ENCODE measurements at regions of chr10 and their contacts with region 1.

Region 1: GRCh38 chr10:84542522-84543490 is 214.4 kb downstream of the CCSER2 start:
- DNase-seq: no peak
- H3K4me3 ChIP-seq: no peak overlapping the region
- H3K27ac ChIP-seq: no peak overlapping the region
- H3K4me1 ChIP-seq: no peaks in the 10 kb centered on the region
- H3K27me3 ChIP-seq: peaks cover 3% of the 10 kb centered on the region
- CTCF ChIP-seq: no peak

Region 2: DNA sequence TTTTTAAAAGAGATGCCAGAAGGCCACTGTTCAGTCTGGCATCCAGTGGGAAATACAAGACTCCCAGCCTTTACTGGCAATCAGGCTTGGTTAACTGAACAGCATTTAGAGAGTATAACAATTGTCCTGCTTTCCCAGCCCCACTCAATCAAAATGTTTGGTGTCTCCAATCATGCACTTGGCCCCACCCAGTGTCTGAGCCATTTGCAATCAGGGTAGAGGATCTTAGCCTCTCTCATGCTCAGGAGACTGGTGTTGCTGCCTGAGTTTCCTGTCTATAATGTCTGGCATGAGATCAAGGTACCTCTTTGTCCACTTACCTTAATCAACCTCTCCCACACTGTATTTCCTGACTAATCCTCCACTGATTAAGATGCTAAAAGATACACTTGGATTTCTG is 693.7 kb before region 1 on chr10:
- CTCF ChIA-PET with region 1: no interaction called
- POLR2A ChIA-PET with region 1: no interaction called
- intact Hi-C with region 1: no loop called
- DNase-seq: no peak
- H3K4me3 ChIP-seq: no peak overlapping the region
- H3K27ac ChIP-seq: no peak overlapping the region
- H3K4me1 ChIP-seq: no peaks in the 10 kb centered on the region
- H3K27me3 ChIP-seq: no peaks in the 10 kb centered on the region
- CTCF ChIP-seq: no peak

Region 3: GRCh38 chr10:84156768-84157167 is 386.0 kb before region 1 on chr10:
- CTCF ChIA-PET with region 1: no interaction called
- POLR2A ChIA-PET with region 1: interaction called, 19 read pairs
- intact Hi-C with region 1: no loop called
- DNase-seq: no peak
- H3K4me3 ChIP-seq: no peak overlapping the region
- H3K27ac ChIP-seq: no peak overlapping the region
- H3K4me1 ChIP-seq: no peaks in the 10 kb centered on the region
- H3K27me3 ChIP-seq: peaks cover 10% of the 10 kb centered on the region
- CTCF ChIP-seq: no peak